A549 (cell line): ENCODE measurements at regions of chr14 and their contacts with region 1.

Region 1: DNA sequence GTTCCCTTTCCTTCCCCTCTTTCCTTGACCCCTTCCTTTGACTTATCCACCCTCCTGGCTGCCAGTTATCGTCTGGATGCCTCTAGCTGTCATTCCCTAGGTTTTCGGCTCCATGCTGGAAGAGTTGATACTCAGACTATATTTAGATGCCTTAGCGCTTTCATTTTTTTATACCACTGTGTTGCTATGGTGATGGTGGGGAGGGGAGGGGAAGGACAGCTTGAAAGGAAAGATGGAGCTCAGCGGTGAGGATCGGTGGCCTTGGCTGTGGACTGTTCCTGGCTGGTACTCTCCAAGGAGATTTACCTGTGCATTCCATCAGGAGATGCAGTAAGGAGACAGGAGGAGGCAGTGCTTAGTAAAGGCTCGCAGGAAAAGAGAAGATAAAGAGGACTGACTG is 108.7 kb downstream of the SLC8A3 start:
- DNase-seq: no peak
- ATAC-seq: no peak
- H3K4me3 ChIP-seq: no peak overlapping the region
- H3K27ac ChIP-seq: no peak overlapping the region
- H3K4me1 ChIP-seq: no peaks in the 10 kb centered on the region
- CTCF ChIP-seq: no peak
- EP300 ChIP-seq: no peak
- POLR2A ChIP-seq: no peak
- RAD21 ChIP-seq: no peak

Region 2: GRCh38 chr14:70114621-70115156 is 34.6 kb after region 1 on chr14:
- CTCF ChIA-PET with region 1: no interaction called
- POLR2A ChIA-PET with region 1: no interaction called
- DNase-seq: no peak
- ATAC-seq: no peak
- H3K4me3 ChIP-seq: no peak overlapping the region
- H3K27ac ChIP-seq: no peak overlapping the region
- H3K4me1 ChIP-seq: no peaks in the 10 kb centered on the region
- CTCF ChIP-seq: no peak
- EP300 ChIP-seq: no peak
- POLR2A ChIP-seq: no peak
- RAD21 ChIP-seq: no peak

Region 3: DNA sequence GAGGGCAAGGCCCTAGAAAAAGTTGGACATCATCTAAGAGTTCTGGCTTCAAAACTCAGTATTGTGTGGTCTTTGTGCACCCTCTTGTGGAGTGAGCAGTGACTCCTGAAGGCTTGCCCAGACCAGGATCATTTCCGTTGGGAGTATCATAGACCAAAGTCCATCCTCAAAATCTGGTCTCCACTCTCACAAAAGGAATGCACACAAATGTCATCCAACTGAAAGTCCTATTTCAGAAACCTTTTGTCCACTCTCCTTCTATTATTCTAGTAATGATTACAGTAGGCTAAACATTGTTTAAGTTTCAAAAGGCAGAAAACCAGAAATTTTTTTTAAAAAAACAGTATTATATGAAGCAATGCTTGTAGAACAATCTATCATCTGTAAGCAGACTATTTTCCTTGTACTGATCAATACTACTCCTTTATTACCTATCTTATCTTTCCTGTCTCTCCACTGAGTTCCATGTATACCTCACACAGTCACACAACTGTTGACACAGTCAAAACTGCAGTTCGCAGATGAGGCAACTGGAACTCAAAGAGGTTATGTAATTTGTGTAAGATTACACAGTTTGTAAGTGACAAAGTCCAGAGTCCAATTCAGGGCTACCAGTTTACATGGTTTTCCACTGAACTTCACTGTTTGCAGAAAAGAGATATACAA is 238.0 kb after region 1 on chr14:
- CTCF ChIA-PET with region 1: interaction called, 10 read pairs
- POLR2A ChIA-PET with region 1: no interaction called
- DNase-seq: peak; percentile 40 to 78
- ATAC-seq: peak; percentile 97
- H3K4me3 ChIP-seq: peak overlapping the region; percentile 8; the same call in 1 of the 3 replicates
- H3K27ac ChIP-seq: 0 out of 6 replicates have a peak overlapping the region, but pooled peaks of 1 of the 2 experiments have one; percentile 11
- H3K4me1 ChIP-seq: peaks cover 16% of the 10 kb centered on the region; the same call in 2 of the 3 replicates
- CTCF ChIP-seq: peak; percentile 83
- EP300 ChIP-seq: no peak
- POLR2A ChIP-seq: no peak
- RAD21 ChIP-seq: peak; percentile 78 to 92